ENCODE measurements at regions of chr10 and their contacts with region 1.

Region 1: GRCh38 chr10:123582084-123582989 is 83.8 kb upstream of the GPR26 start:
- DNase-seq: peak; percentile 47 to 55
- ATAC-seq: peak; percentile 74 to 75
- H3K4me3 ChIP-seq: no peak overlapping the region
- H3K27ac ChIP-seq: no peak overlapping the region
- H3K4me1 ChIP-seq: peaks cover 0 to 5% of the 10 kb centered on the region in 2 donors
- H3K27me3 ChIP-seq: peaks cover 0 to 10% (median 3%) of the 10 kb centered on the region in 3 donors
- CTCF ChIP-seq: peak in 4 of 5 experiments; percentile 34 to 73 (median 68)
- POLR2A ChIP-seq: no peak

Region 2: DNA sequence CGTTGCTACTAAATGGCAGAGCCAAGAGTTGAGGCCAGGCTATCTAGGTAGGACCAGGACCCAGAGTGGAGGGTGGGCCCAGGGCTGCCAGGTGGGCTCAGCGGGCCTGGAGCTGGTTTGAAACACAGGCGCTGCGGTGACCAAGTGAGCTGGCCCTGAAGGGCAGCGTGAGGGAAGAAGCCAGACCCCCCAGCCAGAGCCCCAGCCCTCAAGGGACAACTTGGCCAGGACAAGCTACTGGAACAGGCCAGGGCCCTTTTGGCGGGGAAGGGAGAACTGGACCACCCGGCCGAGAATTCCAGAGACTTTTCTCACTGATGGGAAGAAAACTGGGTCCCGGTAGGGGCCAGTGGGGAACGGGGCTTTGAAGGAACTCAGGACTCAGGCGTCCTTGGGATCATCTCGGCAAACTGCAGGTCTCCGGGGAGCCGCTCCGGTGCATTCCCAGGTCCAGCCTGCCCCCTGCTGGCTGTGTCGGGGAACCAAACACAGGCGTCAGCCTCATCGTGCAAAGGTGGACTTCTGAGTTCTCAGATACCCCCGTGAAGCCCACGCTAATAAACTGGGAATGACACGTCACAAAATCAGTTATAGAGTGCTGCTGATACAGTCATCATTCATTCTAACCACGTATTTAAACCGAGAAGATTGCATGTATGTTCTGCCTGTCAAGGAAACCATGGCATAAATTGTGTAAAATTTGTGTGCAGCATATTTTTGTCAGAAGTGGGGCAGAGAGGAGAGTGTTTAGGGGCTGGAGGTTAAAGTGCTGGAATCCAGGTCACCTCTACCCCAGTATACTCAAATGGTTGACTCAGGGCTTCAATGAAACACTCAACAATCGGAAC is 385.3 kb after region 1 on chr10:
- in situ Hi-C with region 1: loop called (anchors 5 kb)
- intact Hi-C with region 1: loop called (anchors 1 kb)
- DNase-seq: peak; percentile 29 to 35
- ATAC-seq: peak in 1 of 2 donors; percentile 64
- H3K4me3 ChIP-seq: no peak overlapping the region
- H3K27ac ChIP-seq: no peak overlapping the region
- H3K4me1 ChIP-seq: no peaks in the 10 kb centered on the region
- H3K27me3 ChIP-seq: peaks cover 23 to 46% (median 32%) of the 10 kb centered on the region in 3 donors
- CTCF ChIP-seq: peak; percentile 72 to 86 (median 75)
- POLR2A ChIP-seq: no peak

Measured in gastrocnemius medialis (tissue), 4 donors.